ENCODE measurements at regions of chr10 and their contacts with region 1.

Region 1: GRCh38 chr10:132961787-132962622 is 19.6 kb upstream of the CFAP46 start:
- DNase-seq: peak; percentile 89
- H3K4me3 Mint-ChIP-seq: peak overlapping the region; percentile 74
- H3K27ac Mint-ChIP-seq: peak overlapping the region; percentile 79
- H3K4me1 Mint-ChIP-seq: peaks cover 18% of the 10 kb centered on the region
- H3K27me3 Mint-ChIP-seq: peaks cover 9% of the 10 kb centered on the region

Region 2: GRCh38 chr10:132929953-132930548 is 32.0 kb before region 1 on chr10:
- CTCF ChIA-PET with region 1: no interaction called
- POLR2A ChIA-PET with region 1: no interaction called
- intact Hi-C with region 1: loop called (anchors 2 kb)
- DNase-seq: peak; percentile 41
- H3K4me3 Mint-ChIP-seq: no peak overlapping the region
- H3K27ac Mint-ChIP-seq: peak overlapping the region; percentile 67
- H3K4me1 Mint-ChIP-seq: peaks cover 16% of the 10 kb centered on the region
- H3K27me3 Mint-ChIP-seq: no peaks in the 10 kb centered on the region

Region 3: DNA sequence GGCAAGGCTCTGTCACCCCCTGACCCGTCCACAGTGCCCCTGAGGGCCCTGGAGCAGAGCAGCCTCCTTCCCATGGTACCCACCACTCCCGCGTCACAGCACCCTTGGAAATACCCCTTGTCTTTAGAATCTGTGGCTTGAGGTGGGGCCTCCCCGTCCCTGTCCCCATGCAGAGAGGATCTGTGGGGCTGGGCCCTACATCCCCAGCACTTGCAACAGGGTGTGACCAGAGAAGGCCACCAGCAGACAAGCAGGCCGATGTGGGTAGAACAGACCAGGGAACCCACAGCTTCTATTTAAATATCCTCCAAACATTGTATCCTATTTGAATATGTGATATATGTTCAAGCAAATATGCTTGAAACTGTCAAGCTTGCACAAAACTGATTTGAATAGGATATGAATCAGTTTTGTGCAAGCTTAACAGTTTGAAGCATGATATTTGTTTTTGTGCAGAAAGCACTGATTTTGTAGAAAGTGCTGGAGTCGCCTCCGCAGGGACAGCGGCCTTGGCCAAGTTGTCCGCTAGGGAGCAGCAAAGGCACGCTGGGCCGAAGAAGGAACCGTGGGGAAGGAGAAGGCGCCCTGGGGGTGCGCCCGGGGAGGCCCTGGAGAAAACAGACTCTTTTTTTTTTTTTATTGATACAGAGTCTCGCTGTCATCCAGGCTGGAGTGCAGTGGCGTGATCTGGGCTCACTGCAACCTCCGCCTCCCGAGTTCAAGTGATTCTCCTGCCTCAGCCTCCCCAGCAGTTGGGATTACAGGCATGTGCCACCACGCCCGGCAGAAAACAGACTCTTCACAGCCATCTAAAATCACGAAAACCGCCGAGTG is 21.8 kb before region 1 on chr10:
- CTCF ChIA-PET with region 1: interaction called, 4 read pairs
- POLR2A ChIA-PET with region 1: no interaction called
- intact Hi-C with region 1: loop called (anchors 2 kb)
- DNase-seq: peak; percentile 71
- H3K4me3 Mint-ChIP-seq: no peak overlapping the region
- H3K27ac Mint-ChIP-seq: no peak overlapping the region
- H3K4me1 Mint-ChIP-seq: peaks cover 11% of the 10 kb centered on the region
- H3K27me3 Mint-ChIP-seq: peaks cover 44% of the 10 kb centered on the region

Region 4: DNA sequence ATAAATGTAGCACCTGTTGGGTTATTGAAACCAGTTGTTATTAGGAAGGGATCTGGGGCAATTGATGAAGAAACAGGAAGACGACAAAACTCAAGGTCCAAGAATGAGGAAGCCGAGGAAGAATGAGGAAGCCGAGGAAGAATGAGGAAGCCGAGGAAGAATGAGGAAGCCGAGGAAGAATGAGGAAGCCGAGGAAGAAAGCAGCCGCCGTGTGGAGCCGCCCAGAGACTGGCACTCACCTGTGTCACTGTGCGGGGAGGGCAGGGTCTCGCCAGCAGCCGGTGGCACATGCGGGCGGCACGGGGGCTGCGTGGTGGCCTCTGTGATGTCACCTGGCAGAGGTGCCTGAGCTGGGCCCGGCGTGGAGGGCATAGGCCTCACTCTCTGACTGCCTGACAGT is 51.5 kb after region 1 on chr10:
- CTCF ChIA-PET with region 1: no interaction called
- POLR2A ChIA-PET with region 1: no interaction called
- intact Hi-C with region 1: no loop called
- DNase-seq: no peak
- H3K4me3 Mint-ChIP-seq: no peak overlapping the region
- H3K27ac Mint-ChIP-seq: no peak overlapping the region
- H3K4me1 Mint-ChIP-seq: no peaks in the 10 kb centered on the region
- H3K27me3 Mint-ChIP-seq: no peaks in the 10 kb centered on the region

Measured in activated CD4-positive, alpha-beta memory T cell treated with anti-CD3 and anti-CD28 coated beads for 36 hours (primary cell).